Panc1 (cell line): ENCODE measurements at regions of chr10 and their contacts with region 1.

Region 1: GRCh38 chr10:46314071-46314470 is 27.3 kb downstream of the ANTXRL start:
- DNase-seq: no peak
- ATAC-seq: no peak
- H3K4me3 ChIP-seq: no peak overlapping the region
- H3K27ac ChIP-seq: no peak overlapping the region
- H3K4me1 ChIP-seq: 0 out of 2 replicates have a peak, but pooled peaks cover 2% of the 10 kb centered on the region
- H3K27me3 ChIP-seq: no peaks in the 10 kb centered on the region; the same call in 1 of the 2 replicates
- CTCF ChIP-seq: no peak

Region 2: GRCh38 chr10:46301056-46301645 is 12.9 kb before region 1 on chr10:
- CTCF ChIA-PET with region 1: no interaction called
- POLR2A ChIA-PET with region 1: interaction called, 18 read pairs
- in situ Hi-C with region 1: no loop called
- intact Hi-C with region 1: no loop called
- DNase-seq: no peak
- ATAC-seq: no peak
- H3K4me3 ChIP-seq: no peak overlapping the region
- H3K27ac ChIP-seq: no peak overlapping the region
- H3K4me1 ChIP-seq: no peaks in the 10 kb centered on the region
- H3K27me3 ChIP-seq: 0 out of 2 replicates have a peak, but pooled peaks cover 2% of the 10 kb centered on the region
- CTCF ChIP-seq: no peak